Ovary (tissue), 10 donors: ENCODE measurements at regions of chr9 and their contacts with region 1.

Region 1: GRCh38 chr9:15205632-15206420 is 101.2 kb downstream of the TTC39B start:
- DNase-seq: no peak
- H3K4me3 ChIP-seq: no peak overlapping the region
- H3K27ac ChIP-seq: no peak overlapping the region
- H3K4me1 ChIP-seq: no peaks in the 10 kb centered on the region
- H3K27me3 ChIP-seq: no peaks in the 10 kb centered on the region
- CTCF ChIP-seq: no peak
- EP300 ChIP-seq: no peak
- POLR2A ChIP-seq: no peak

Region 2: DNA sequence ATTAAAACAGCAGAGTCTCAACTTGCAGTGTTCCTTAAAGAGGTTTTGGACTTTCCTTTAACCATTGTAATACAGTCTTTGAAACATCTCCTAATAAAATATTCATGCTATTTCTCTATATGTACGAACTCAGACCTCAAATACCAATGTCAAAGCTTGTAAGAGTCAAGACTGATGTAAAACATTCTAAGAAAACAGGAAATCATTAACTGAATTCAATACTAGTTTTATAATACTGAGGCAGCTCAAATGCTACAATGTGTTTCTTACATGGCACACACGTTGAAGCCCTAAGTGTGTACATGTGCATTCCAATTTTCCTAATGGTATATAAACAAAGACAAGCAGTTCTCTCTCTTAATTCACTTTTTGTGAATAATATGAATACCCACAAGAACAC is 293.3 kb after region 1 on chr9:
- intact Hi-C with region 1: loop called in 1 of 4 experiments (anchors 10 kb)
- DNase-seq: no peak
- H3K4me3 ChIP-seq: no peak overlapping the region
- H3K27ac ChIP-seq: no peak overlapping the region
- H3K4me1 ChIP-seq: peaks cover 1% of the 10 kb centered on the region
- H3K27me3 ChIP-seq: no peaks in the 10 kb centered on the region
- CTCF ChIP-seq: no peak
- EP300 ChIP-seq: no peak
- POLR2A ChIP-seq: no peak